Mucosa of descending colon (tissue), 3 donors: ENCODE measurements at regions of chr5 and their contacts with region 1.

Region 1: GRCh38 chr5:68287976-68288706 is 72.6 kb downstream of the PIK3R1 start:
- DNase-seq: peak; percentile 76 to 80 (median 79)
- ATAC-seq: peak; percentile 82
- H3K4me3 ChIP-seq: peak overlapping the region; percentile 14
- H3K4me1 ChIP-seq: peaks cover 43% of the 10 kb centered on the region
- CTCF ChIP-seq: no peak

Region 2: DNA sequence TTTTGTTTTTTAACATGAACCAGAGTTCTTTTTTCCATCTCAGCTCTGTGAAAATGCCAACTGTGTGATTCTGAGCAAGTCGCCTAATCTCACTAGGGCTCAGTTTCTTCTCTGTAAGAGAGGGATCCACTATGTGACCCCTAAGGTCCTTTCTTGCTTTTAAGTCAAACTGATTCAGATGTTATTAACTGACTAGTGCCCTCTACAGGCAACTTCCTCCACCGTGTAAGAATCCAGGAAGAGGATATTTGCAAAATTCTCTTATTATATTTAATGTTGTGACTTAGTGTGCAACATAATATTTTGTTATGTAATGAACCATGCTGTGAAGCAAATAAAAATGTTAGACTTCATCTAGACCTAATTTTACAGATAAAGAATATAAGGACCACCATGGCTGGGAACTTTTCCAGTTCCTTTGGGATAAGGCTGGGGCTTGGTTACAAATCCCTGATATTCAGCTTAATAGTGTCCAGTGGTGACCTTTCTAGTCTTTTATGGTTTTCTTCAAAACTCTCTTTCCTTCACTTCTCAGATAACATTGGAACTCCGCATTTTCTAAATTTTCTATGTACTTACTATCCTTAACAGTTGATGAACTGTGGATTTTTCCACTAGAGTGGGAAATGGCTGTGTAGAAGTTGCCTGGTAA is 172.1 kb after region 1 on chr5:
- intact Hi-C with region 1: loop called (anchors 2 to 10 kb)
- DNase-seq: peak in 1 of 3 donors; percentile 87
- ATAC-seq: peak; percentile 58
- H3K4me3 ChIP-seq: no peak overlapping the region
- H3K4me1 ChIP-seq: peaks cover 9% of the 10 kb centered on the region
- CTCF ChIP-seq: peak; percentile 40